GM12878 (cell line): ENCODE measurements at regions of chr1 and their contacts with region 1.

Region 1: GRCh38 chr1:47179017-47179987 is 10.5 kb downstream of the PDZK1IP1 start:
- DNase-seq: peak; percentile 60
- ATAC-seq: peak; percentile 92
- H3K4me3 ChIP-seq: peak overlapping the region; percentile 60; the same call in 1 of the 2 replicates
- H3K27ac ChIP-seq: no peak overlapping the region
- H3K4me1 ChIP-seq: peaks cover 3% of the 10 kb centered on the region; the same call in 1 of the 2 replicates
- H3K27me3 ChIP-seq: no peaks in the 10 kb centered on the region
- CTCF ChIP-seq: peak; percentile 93 to 97 (median 95); a peak in 5 of 6 replicates
- EP300 ChIP-seq: no peak
- POLR2A ChIP-seq: peak; percentile 61
- RAD21 ChIP-seq: peak; percentile 68

Region 2: GRCh38 chr1:46747683-46748288 is 431.5 kb before region 1 on chr1:
- CTCF ChIA-PET with region 1: no interaction called
- POLR2A ChIA-PET with region 1: no interaction called
- RAD21 ChIA-PET with region 1: no interaction called
- SMC1A ChIA-PET with region 1: no interaction called
- in situ Hi-C with region 1: no loop called
- intact Hi-C with region 1: loop called (anchors 5 kb)
- DNase-seq: no peak
- ATAC-seq: peak; percentile 73
- H3K4me3 ChIP-seq: no peak overlapping the region
- H3K27ac ChIP-seq: no peak overlapping the region
- H3K4me1 ChIP-seq: no peaks in the 10 kb centered on the region
- H3K27me3 ChIP-seq: peaks cover 0 to 2% of the 10 kb centered on the region in 2 experiments; a peak in 2 of 4 replicates
- CTCF ChIP-seq: peak; percentile 22 to 40 (median 35); a peak in 3 of 6 replicates
- EP300 ChIP-seq: no peak
- POLR2A ChIP-seq: no peak
- RAD21 ChIP-seq: peak; percentile 25; the same call in 1 of the 2 replicates

Region 3: GRCh38 chr1:47164552-47164951 is 14.8 kb before region 1 on chr1:
- CTCF ChIA-PET with region 1: interaction called, 10 read pairs
- POLR2A ChIA-PET with region 1: no interaction called
- RAD21 ChIA-PET with region 1: no interaction called
- SMC1A ChIA-PET with region 1: no interaction called
- in situ Hi-C with region 1: no loop called
- intact Hi-C with region 1: no loop called
- DNase-seq: no peak
- ATAC-seq: no peak
- H3K4me3 ChIP-seq: no peak overlapping the region
- H3K27ac ChIP-seq: no peak overlapping the region
- H3K4me1 ChIP-seq: no peaks in the 10 kb centered on the region
- H3K27me3 ChIP-seq: no peaks in the 10 kb centered on the region
- CTCF ChIP-seq: no peak
- EP300 ChIP-seq: no peak
- POLR2A ChIP-seq: no peak
- RAD21 ChIP-seq: no peak

Region 4: GRCh38 chr1:47201179-47201578 is 21.9 kb after region 1 on chr1:
- CTCF ChIA-PET with region 1: interaction called, 10 read pairs
- POLR2A ChIA-PET with region 1: no interaction called
- RAD21 ChIA-PET with region 1: no interaction called
- SMC1A ChIA-PET with region 1: interaction called, 3 read pairs
- in situ Hi-C with region 1: no loop called
- intact Hi-C with region 1: no loop called
- DNase-seq: no peak
- ATAC-seq: no peak
- H3K4me3 ChIP-seq: no peak overlapping the region
- H3K27ac ChIP-seq: no peak overlapping the region
- H3K4me1 ChIP-seq: no peaks in the 10 kb centered on the region
- H3K27me3 ChIP-seq: peaks cover 0 to 4% of the 10 kb centered on the region in 2 experiments; a peak in 3 of 4 replicates
- CTCF ChIP-seq: no peak
- EP300 ChIP-seq: no peak
- POLR2A ChIP-seq: no peak
- RAD21 ChIP-seq: no peak

Region 5: GRCh38 chr1:47437447-47438164 is 258.3 kb after region 1 on chr1 and contains the start of gene FOXD2:
- CTCF ChIA-PET with region 1: interaction called, 18 read pairs
- POLR2A ChIA-PET with region 1: no interaction called
- RAD21 ChIA-PET with region 1: interaction called, 8 read pairs
- SMC1A ChIA-PET with region 1: interaction called, 3 read pairs
- in situ Hi-C with region 1: no loop called
- intact Hi-C with region 1: loop called (anchors 10 kb)
- DNase-seq: peak; percentile 59
- ATAC-seq: peak; percentile 84
- H3K4me3 ChIP-seq: peak within 1 kb of the TSS; percentile 88
- H3K27ac ChIP-seq: peak within 1 kb of the TSS; percentile 64
- H3K4me1 ChIP-seq: peaks cover 8% of the 10 kb centered on the region
- H3K27me3 ChIP-seq: peaks cover 12 to 14% of the 10 kb centered on the region in 2 experiments
- CTCF ChIP-seq: peak; percentile 70 to 81 (median 75)
- EP300 ChIP-seq: no peak
- POLR2A ChIP-seq: peak; percentile 70
- RAD21 ChIP-seq: peak; percentile 21; the same call in 1 of the 2 replicates
- polyA plus RNA-seq, gene FOXD2: 0.04 TPM in 1 of 2 experiments, not detected in the other